ENCODE measurements at regions of chr15 and their contacts with region 1.

Region 1: GRCh38 chr15:74950078-74951000 is 6.2 kb downstream of the RPP25 start:
- DNase-seq: peak; percentile 67
- H3K4me3 ChIP-seq: no peak overlapping the region; a peak in 1 of 4 replicates
- H3K27ac ChIP-seq: no peak overlapping the region; a peak in 1 of 4 replicates
- H3K4me1 ChIP-seq: peaks cover 0 to 18% of the 10 kb centered on the region in 2 experiments; a peak in 1 of 4 replicates
- H3K27me3 ChIP-seq: no peaks in the 10 kb centered on the region
- CTCF ChIP-seq: peak; percentile 98
- EP300 ChIP-seq: 0 out of 4 replicates have a peak, but pooled peaks of 1 of the 2 experiments have one; percentile 10
- RAD21 ChIP-seq: peak; percentile 96

Region 2: DNA sequence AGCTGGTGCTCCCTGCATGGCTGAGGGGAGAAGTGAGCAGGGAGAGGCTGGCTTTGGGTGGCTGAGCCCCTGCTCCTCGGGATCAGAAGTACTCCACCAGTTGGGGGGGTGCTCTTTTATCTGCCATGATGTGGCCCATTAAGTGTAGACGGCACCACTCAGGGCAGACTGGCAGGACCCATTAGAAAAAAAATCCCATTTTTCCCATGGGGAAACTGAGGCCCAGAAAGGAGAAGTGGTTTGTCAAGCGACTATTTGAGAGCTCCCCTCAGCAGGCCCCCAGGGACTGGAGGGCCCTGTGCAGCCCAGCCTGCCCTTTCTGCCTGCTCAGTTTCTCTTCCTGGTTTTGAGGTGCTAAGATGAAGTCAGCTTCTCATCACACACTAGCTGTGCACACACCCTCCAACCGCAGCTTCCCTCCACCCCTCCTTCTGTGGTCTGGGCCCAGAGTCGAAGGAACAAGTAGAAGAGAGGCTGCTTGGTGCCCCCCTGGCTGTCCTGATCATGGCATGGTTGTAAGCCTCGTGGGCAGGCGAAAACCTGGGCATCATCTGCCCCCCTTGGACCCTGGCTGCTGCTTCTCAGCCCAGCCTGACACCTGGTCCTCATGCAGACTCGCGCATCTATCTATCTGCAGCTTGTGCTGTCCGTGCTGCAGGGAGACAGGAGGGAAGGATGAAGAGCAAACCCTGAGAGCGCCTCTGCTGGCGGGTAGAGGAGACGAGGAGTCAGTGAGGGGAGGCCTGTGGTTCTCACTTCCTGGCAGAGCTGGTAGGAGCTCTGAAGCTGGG is 162.9 kb before region 1 on chr15:
- CTCF ChIA-PET with region 1: interaction called, 18 read pairs
- POLR2A ChIA-PET with region 1: no interaction called
- DNase-seq: peak; percentile 69
- H3K4me3 ChIP-seq: no peak overlapping the region; a peak in 1 of 4 replicates
- H3K27ac ChIP-seq: 0 out of 4 replicates have a peak overlapping the region, but pooled peaks of 1 of the 2 experiments have one; percentile 17
- H3K4me1 ChIP-seq: peaks cover 21 to 70% of the 10 kb centered on the region in 2 experiments
- H3K27me3 ChIP-seq: no peaks in the 10 kb centered on the region
- CTCF ChIP-seq: peak; percentile 55
- EP300 ChIP-seq: no peak
- RAD21 ChIP-seq: 0 out of 2 replicates have a peak, but pooled peaks have one; percentile 13

Region 3: GRCh38 chr15:74897300-74897701 is 53.0 kb before region 1 on chr15:
- CTCF ChIA-PET with region 1: interaction called, 33 read pairs
- POLR2A ChIA-PET with region 1: interaction called, 10 read pairs
- DNase-seq: no peak
- H3K4me3 ChIP-seq: no peak overlapping the region
- H3K27ac ChIP-seq: peak overlapping the region in 1 of 2 experiments; percentile 23; a peak in 1 of 4 replicates
- H3K4me1 ChIP-seq: peaks cover 3 to 7% of the 10 kb centered on the region in 2 experiments; a peak in 2 of 4 replicates
- H3K27me3 ChIP-seq: no peaks in the 10 kb centered on the region
- CTCF ChIP-seq: no peak
- EP300 ChIP-seq: no peak
- RAD21 ChIP-seq: no peak

Region 4: DNA sequence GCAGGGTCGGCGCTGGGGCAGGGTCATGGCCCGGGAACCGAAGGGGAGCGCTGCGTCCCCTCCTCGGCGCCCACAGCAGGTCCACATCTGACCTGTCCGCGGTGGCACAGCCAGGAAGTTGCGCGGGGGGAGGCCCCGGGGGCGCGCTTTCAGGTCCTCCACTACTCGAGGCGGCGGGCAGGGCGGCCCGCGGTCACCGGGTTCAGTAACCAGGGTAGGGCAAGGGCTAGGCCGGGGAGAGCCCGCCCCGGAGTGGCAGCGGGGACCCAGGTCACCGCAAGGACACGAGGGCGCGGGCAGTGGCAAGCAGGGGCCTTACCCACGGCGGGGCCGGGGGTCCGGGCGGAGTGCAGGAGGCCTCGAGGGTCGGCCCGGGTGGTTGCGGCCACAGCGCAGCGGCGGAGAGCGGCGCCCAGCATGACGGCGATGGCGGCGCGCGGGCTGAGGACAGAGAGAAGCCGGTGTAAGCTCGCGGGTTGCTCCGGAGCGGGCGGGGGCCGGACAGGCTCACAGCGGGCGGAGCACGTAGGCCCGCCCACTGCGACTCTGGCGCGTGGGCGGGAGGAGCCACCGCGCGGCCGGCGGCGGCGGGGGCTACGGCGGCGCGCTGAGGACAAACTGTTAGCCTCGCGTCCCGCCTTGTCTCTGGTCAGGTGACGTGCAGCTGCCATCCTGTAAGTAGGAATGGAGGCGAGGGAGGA is 12.6 kb before region 1 on chr15 and contains the start of gene COX5A:
- CTCF ChIA-PET with region 1: interaction called, 42 read pairs
- POLR2A ChIA-PET with region 1: interaction called, 7 read pairs
- DNase-seq: peak; percentile 96
- H3K4me3 ChIP-seq: peak within 1 kb of the TSS; percentile 72 to 90
- H3K27ac ChIP-seq: peak within 1 kb of the TSS; percentile 86 to 89
- H3K4me1 ChIP-seq: 0 out of 4 replicates have a peak, but pooled peaks cover 0 to 6% of the 10 kb centered on the region in 2 experiments
- H3K27me3 ChIP-seq: no peaks in the 10 kb centered on the region
- CTCF ChIP-seq: no peak
- EP300 ChIP-seq: peak in 1 of 2 experiments; percentile 57; a peak in 2 of 4 replicates
- RAD21 ChIP-seq: peak; percentile 17; the same call in 1 of the 2 replicates
- polyA plus RNA-seq, gene COX5A: 112 and 158 TPM in 2 replicates

Region 5: GRCh38 chr15:74988007-74988800 is 37.9 kb after region 1 on chr15:
- CTCF ChIA-PET with region 1: interaction called, 36 read pairs
- POLR2A ChIA-PET with region 1: interaction called, 4 read pairs
- DNase-seq: peak; percentile 72
- H3K4me3 ChIP-seq: no peak overlapping the region; a peak in 1 of 4 replicates
- H3K27ac ChIP-seq: no peak overlapping the region
- H3K4me1 ChIP-seq: no peaks in the 10 kb centered on the region
- H3K27me3 ChIP-seq: no peaks in the 10 kb centered on the region
- CTCF ChIP-seq: peak; percentile 55
- EP300 ChIP-seq: no peak
- RAD21 ChIP-seq: peak; percentile 89

Region 6: GRCh38 chr15:74995241-74995778 is 45.0 kb after region 1 on chr15 and contains the start of gene SCAMP5:
- CTCF ChIA-PET with region 1: interaction called, 36 read pairs
- POLR2A ChIA-PET with region 1: interaction called, 47 read pairs
- DNase-seq: peak; percentile 97
- H3K4me3 ChIP-seq: peak within 1 kb of the TSS; percentile 67 to 84
- H3K27ac ChIP-seq: peak within 1 kb of the TSS in 1 of 2 experiments; percentile 90; a peak in 2 of 4 replicates
- H3K4me1 ChIP-seq: peaks cover 0 to 17% of the 10 kb centered on the region in 2 experiments; a peak in 1 of 4 replicates
- H3K27me3 ChIP-seq: no peaks in the 10 kb centered on the region
- CTCF ChIP-seq: no peak
- EP300 ChIP-seq: 0 out of 4 replicates have a peak, but pooled peaks of 1 of the 2 experiments have one; percentile 2
- RAD21 ChIP-seq: no peak
- polyA plus RNA-seq, gene SCAMP5: 27.9 and 32.7 TPM in 2 replicates

Measured in SK-N-SH (cell line).